ENCODE measurements at regions of chr14 and their contacts with region 1.

Region 1: DNA sequence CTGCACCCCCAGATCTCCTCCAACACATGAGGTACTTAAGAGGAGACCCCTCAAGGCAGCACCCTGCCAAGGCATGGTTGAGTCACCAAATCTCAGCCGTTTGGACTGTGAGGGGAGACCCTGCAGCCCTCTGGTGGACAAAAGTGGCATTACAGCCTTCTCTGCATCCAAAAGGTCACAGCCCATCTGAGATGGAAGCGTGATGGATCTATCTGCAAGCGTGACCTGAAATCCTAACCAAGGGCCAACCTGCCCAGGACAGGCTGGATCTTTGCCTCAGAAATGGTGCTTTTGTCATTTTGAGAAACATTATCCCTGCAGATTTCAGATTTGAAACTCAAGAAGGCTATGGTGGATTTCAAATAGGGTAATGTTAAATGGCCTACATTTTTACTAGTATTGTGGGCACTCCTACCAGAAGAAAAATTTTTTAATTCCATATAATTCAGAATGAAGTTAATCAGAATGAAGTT is 23.7 kb upstream of the DHRS4 start:
- DNase-seq: peak in 1 of 2 donors; percentile 89
- H3K4me3 ChIP-seq: no peak overlapping the region
- H3K27ac ChIP-seq: peak overlapping the region in 1 of 2 donors; percentile 35
- H3K4me1 ChIP-seq: peaks cover 5 to 11% of the 10 kb centered on the region in 2 donors
- H3K27me3 ChIP-seq: no peaks in the 10 kb centered on the region
- CTCF ChIP-seq: peak; percentile 60 to 92 (median 81)

Region 2: DNA sequence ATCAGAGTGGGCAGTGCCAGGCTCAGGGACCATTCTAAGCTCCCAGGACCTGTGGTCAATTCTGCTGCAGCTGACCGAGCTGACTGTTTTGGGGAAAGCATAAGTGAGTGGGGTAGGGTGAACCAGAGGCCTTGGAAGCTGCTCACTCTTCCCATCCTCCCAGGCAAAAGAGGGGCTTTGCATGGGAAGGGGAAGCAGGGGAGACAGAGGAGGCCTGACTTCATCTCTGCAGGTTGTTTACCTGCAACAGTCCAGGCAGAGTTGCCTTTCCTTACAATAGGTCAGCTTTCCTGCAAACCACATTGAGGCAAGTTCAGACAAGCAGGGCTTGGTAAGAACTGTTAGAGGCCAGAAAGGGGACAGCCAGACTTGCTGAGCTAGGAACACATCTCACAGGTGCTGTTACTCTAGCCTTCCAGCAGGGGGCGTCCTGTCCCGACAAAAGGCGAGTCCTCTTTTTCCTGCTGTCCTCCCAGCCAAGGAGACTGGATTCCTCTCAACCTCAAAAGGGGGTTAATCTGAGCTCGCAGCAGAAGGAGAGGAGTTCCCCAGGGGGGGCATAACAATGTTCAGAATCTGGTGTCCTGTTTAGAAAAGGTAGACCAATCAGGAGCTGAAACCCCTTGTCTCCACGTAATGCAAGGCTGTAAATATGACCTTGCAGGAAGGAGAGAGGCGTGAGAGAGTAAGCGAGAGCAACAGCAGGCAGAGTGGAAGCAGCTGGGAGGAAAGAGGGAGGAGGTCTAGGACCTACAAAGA is 298.0 kb before region 1 on chr14:
- intact Hi-C with region 1: loop called (anchors 10 kb)
- DNase-seq: peak in 1 of 2 donors; percentile 74
- H3K4me3 ChIP-seq: peak overlapping the region in 1 of 2 donors; percentile 47
- H3K27ac ChIP-seq: no peak overlapping the region
- H3K4me1 ChIP-seq: no peaks in the 10 kb centered on the region
- H3K27me3 ChIP-seq: no peaks in the 10 kb centered on the region
- CTCF ChIP-seq: peak; percentile 63 to 90 (median 88)

Region 3: GRCh38 chr14:23953464-23954278 is 23.8 kb after region 1 on chr14 and contains the start of gene DHRS4:
- intact Hi-C with region 1: loop called (anchors 1 kb)
- DNase-seq: peak; percentile 28 to 89
- H3K4me3 ChIP-seq: peak within 1 kb of the TSS; percentile 76 to 97
- H3K27ac ChIP-seq: peak within 1 kb of the TSS; percentile 80 to 83
- H3K4me1 ChIP-seq: peaks cover 2 to 15% of the 10 kb centered on the region in 2 donors
- H3K27me3 ChIP-seq: no peaks in the 10 kb centered on the region
- CTCF ChIP-seq: peak; percentile 77 to 94 (median 90)
- total RNA-seq, gene DHRS4: 9.8 TPM

Region 4: DNA sequence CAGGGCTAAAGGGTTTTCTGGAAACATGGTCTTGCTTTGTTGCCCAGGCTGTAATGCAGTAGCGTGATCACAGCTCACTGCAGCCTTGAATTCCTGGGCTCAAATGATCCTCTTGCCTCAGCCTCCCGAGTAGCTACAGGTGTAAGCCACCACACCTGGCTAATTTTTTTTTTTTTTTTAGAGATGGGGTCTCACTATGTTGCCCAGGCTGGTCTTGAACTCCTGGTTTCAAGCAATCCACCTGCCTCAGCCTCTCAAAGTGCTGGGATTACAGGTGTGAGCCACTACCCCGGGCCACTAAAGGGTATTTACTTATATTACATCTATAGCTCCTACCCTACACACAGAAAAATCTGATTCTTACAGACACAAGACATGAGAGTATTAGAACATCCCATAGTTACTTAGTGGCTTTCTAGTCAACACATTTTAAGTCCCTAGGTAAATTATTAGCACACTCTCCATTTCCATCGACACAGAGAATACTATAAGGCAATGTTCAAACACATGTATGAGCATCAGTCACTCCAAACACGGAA is 178.5 kb after region 1 on chr14:
- intact Hi-C with region 1: no loop called
- DNase-seq: no peak
- H3K4me3 ChIP-seq: no peak overlapping the region
- H3K27ac ChIP-seq: no peak overlapping the region
- H3K4me1 ChIP-seq: peaks cover 0 to 6% of the 10 kb centered on the region in 2 donors
- H3K27me3 ChIP-seq: no peaks in the 10 kb centered on the region
- CTCF ChIP-seq: no peak

Measured in ascending aorta (tissue), 2 donors.